Prostate gland (tissue), 2 donors: ENCODE measurements at regions of chr1 and their contacts with region 1.

Region 1: DNA sequence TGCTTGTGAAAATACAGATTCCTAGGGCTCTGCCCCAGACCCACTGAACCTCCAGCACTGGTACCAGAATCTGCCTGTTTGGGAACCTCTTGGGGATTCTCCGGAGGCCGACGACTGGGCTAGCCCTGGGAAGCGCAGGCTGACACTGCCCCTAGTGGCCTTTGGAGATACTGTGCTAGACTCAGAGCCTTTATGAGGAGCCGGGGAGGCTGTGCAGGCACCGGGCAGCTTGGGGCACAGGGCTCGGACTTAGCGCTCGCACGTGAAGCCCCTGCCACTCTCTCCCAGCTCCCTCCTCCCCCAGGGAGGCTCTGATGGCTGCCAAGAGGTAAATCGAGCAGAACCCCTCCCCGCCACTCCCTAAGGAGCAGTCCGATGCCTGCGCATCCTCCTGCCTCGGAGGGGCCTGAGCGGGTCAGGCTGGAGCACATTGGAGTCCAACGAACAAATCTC is 144.6 kb upstream of the TNR start:
- DNase-seq: no peak
- H3K4me3 ChIP-seq: no peak overlapping the region
- H3K27ac ChIP-seq: no peak overlapping the region
- H3K4me1 ChIP-seq: no peaks in the 10 kb centered on the region
- H3K27me3 ChIP-seq: no peaks in the 10 kb centered on the region
- CTCF ChIP-seq: peak in 3 of 4 experiments; percentile 26 to 52 (median 33)
- POLR2A ChIP-seq: no peak

Region 2: DNA sequence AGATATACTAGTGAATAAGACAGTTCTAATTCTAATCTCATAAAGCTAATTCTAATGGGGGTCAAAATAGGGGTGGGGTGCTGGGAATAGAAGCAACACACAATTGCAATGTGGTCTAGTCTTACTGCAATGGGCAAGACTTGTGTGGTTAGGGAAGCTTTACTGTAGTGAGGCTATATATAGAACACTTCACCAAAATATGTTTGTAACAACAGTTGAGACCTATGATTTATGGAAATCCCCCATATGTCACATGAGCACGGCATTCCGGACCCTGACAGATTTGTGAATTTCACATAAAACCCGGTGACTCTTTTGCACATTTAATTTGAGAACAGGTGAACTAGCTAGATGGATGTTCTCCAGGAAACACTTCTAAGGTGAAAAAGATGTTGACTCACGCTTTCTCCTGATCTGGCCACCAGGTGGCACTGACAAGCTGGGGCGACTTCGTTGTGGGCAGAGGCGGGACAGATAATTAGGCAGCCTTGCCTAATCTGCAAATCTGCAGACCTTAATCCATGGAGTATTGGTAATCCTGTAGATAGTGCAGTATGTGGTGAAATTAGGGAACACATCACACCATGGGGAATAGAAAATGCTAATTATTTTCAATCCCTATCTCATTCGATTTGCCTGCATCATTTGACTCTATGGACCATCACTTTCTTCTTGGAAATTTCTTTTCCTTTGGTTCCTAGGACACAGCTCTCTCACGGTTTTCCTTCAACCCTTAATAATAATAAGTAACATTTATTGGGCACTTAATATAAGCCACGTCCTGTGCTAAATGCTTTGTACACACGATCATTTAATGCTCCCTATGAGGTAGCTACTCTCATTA is 733.2 kb before region 1 on chr1:
- intact Hi-C with region 1: loop called (anchors 10 kb)
- DNase-seq: peak; percentile 70
- H3K4me3 ChIP-seq: no peak overlapping the region
- H3K27ac ChIP-seq: no peak overlapping the region
- H3K4me1 ChIP-seq: no peaks in the 10 kb centered on the region
- H3K27me3 ChIP-seq: no peaks in the 10 kb centered on the region
- CTCF ChIP-seq: peak; percentile 89 to 92 (median 92)
- POLR2A ChIP-seq: no peak

Region 3: DNA sequence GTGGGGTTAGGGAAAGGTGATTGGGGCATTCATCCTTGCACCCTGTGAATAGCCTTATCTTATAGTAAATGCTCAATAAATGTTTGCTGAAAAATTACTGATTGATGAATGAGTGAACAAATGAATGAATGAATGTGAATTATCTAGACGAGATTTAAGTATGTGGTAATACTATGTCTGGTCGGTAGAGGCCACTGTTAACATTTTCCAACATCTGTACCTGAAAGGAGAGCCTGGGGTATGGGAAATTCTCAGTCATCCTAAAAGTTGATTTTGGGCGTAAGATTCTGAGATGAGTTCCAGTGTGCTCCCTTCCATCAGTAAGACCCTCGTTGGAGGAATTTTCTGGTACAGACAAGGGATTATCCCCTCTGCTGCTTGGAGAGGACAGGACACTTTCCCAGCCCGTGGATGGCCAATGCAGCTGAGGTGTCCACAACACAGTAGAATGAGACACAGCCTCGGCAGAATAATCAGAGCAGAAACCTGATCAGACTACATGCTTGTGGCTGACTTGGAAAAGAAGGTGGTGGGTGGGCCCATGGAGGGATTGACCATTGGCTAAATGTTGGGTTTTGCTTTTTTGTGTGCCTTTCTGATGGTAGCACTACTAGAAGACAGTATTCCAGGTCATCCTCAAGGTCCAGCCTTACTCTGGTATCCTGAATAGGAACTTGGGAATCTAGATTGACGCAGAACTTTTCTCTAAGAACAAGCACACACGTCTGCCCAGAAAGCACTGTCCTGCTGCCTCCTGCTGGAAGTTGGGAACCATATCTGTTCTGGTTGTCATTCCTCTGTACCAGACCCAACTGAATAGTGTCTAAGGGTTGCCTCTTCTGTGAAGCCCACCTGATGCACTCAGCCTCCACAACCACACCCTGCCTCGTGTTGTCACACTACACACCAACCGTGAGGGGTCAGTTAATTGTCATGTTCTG is 406.6 kb before region 1 on chr1:
- intact Hi-C with region 1: loop called (anchors 10 kb)
- DNase-seq: no peak
- H3K4me3 ChIP-seq: no peak overlapping the region
- H3K27ac ChIP-seq: peak overlapping the region in 1 of 2 donors; percentile 1
- H3K4me1 ChIP-seq: no peaks in the 10 kb centered on the region
- H3K27me3 ChIP-seq: no peaks in the 10 kb centered on the region
- CTCF ChIP-seq: peak in 3 of 4 experiments; percentile 32 to 59 (median 45)
- POLR2A ChIP-seq: no peak

Region 4: GRCh38 chr1:176033881-176034280 is 145.9 kb after region 1 on chr1:
- intact Hi-C with region 1: no loop called
- DNase-seq: no peak
- H3K4me3 ChIP-seq: no peak overlapping the region
- H3K27ac ChIP-seq: no peak overlapping the region
- H3K4me1 ChIP-seq: no peaks in the 10 kb centered on the region
- H3K27me3 ChIP-seq: no peaks in the 10 kb centered on the region
- CTCF ChIP-seq: no peak
- POLR2A ChIP-seq: no peak